ENCODE measurements at regions of chr17 and their contacts with region 1.

Region 1: GRCh38 chr17:48532261-48532660 is 1.4 kb upstream of the HOXB1 start:
- DNase-seq: no peak
- H3K4me3 ChIP-seq: no peak overlapping the region
- CTCF ChIP-seq: no peak

Region 2: DNA sequence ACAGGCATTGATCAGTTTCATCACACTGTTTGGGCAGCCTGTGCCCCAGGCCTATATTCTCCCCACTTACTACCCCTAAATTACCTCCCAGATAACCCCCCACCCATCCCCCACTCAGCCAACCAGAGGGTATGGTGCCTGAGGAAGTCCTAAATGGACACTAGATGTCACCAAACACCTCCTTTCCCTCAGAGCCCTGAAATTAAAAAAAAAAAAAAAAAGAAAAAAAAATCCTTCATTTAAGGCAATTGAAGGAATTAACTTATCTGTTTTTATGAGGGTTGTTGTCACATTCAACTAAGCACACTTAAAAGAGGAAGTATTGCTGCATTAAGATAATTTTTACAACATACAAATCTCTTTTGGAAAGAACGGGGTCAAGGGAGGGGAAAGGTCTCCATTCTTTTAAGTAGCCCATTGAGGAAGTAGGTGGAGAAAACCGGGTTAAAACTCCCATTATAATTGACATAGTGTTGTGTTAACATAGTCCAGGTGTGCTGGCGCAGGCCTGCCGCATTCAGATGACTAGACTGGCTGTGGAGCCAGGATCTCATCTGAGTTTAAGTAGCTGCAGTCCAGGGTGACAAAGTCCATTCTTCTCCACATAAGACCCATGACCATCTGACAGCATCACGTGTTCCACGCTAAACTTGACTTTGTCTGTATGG is 378.4 kb before region 1 on chr17:
- CTCF ChIA-PET with region 1: no interaction called
- POLR2A ChIA-PET with region 1: no interaction called
- DNase-seq: no peak
- H3K4me3 ChIP-seq: no peak overlapping the region
- CTCF ChIP-seq: peak; percentile 44

Region 3: GRCh38 chr17:48522031-48522653 is 10.1 kb before region 1 on chr17:
- CTCF ChIA-PET with region 1: interaction called, 39 read pairs
- POLR2A ChIA-PET with region 1: interaction called, 3 read pairs
- DNase-seq: no peak
- H3K4me3 ChIP-seq: no peak overlapping the region
- CTCF ChIP-seq: no peak

Region 4: GRCh38 chr17:48543107-48543853 is 11.0 kb after region 1 on chr17:
- CTCF ChIA-PET with region 1: no interaction called
- POLR2A ChIA-PET with region 1: no interaction called
- DNase-seq: no peak
- H3K4me3 ChIP-seq: peak overlapping the region; percentile 84
- CTCF ChIP-seq: no peak

Region 5: GRCh38 chr17:48715496-48716399 is 183.5 kb after region 1 on chr17:
- CTCF ChIA-PET with region 1: no interaction called
- POLR2A ChIA-PET with region 1: no interaction called
- DNase-seq: no peak
- H3K4me3 ChIP-seq: no peak overlapping the region
- CTCF ChIP-seq: no peak